ENCODE measurements at regions of chr1 and their contacts with region 1.

Region 1: DNA sequence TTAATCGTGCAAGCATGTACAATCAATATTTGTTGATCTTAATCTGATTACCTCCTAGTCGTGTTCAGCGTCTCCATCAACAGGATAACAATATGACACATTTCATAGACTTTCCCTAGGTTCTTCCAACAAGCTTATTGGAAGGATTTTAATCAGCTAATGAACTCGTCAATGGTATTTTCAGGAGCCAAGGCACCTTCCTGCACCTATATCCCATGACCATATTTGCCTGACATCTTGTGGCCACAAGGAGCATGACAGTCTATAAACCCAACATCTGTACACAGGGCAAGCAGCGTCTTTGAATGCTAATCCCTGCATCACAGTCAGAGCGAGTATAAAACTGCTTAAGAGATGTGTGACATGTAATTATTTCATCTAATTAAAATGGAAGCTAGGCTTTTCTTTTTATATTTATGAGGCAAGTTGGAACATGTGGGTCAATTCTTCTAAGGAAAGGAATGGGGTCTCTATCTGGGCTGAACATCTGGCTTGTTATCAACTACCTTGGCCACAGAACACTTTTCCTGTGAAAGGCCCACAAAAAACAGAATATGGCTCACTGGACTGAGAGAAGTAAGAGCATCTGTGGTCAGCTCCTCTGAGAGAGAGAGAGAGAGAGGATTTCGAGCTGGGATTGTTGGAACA is 388.8 kb downstream of the NTNG1 start:
- DNase-seq: peak; percentile 19 to 35
- H3K4me3 ChIP-seq: no peak overlapping the region
- H3K4me3 Mint-ChIP-seq: no peak overlapping the region
- H3K27ac Mint-ChIP-seq: no peak overlapping the region
- H3K4me1 ChIP-seq: no peaks in the 10 kb centered on the region
- H3K4me1 Mint-ChIP-seq: no peaks in the 10 kb centered on the region
- H3K27me3 ChIP-seq: no peaks in the 10 kb centered on the region
- H3K27me3 Mint-ChIP-seq: no peaks in the 10 kb centered on the region
- CTCF ChIP-seq: peak; percentile 55

Region 2: DNA sequence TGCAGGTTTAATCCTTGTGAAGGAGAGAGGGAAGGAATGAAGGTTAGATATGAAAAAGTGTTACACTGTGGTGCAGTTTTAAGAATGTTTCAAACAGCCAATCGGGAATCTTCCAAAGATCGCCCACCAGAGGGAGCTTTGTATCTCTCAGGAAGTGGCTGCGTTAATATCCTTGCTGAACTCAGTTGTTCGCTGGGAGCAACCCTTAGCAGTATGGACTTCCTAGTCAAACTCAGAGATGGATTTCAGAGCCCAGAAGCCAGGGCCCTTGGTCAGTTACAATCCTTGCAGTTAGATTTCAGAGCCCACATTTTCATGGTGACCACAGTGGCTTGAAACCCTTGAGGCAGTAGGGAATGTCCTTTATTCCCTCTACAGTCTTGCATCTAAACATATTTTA is 252.6 kb before region 1 on chr1:
- CTCF ChIA-PET with region 1: no interaction called
- POLR2A ChIA-PET with region 1: no interaction called
- intact Hi-C with region 1: loop called (anchors 1 kb)
- DNase-seq: peak; percentile 22 to 40
- H3K4me3 ChIP-seq: no peak overlapping the region
- H3K4me3 Mint-ChIP-seq: no peak overlapping the region
- H3K27ac Mint-ChIP-seq: no peak overlapping the region
- H3K4me1 ChIP-seq: no peaks in the 10 kb centered on the region
- H3K4me1 Mint-ChIP-seq: no peaks in the 10 kb centered on the region
- H3K27me3 ChIP-seq: no peaks in the 10 kb centered on the region
- H3K27me3 Mint-ChIP-seq: no peaks in the 10 kb centered on the region
- CTCF ChIP-seq: peak in 1 of 2 experiments; percentile 52

Region 3: GRCh38 chr1:107430540-107431228 is 98.9 kb before region 1 on chr1:
- CTCF ChIA-PET with region 1: interaction called, 3 read pairs
- POLR2A ChIA-PET with region 1: no interaction called
- intact Hi-C with region 1: loop called (anchors 1 kb)
- DNase-seq: peak; percentile 33 to 44
- H3K4me3 ChIP-seq: no peak overlapping the region
- H3K4me3 Mint-ChIP-seq: no peak overlapping the region
- H3K27ac Mint-ChIP-seq: no peak overlapping the region
- H3K4me1 ChIP-seq: no peaks in the 10 kb centered on the region
- H3K4me1 Mint-ChIP-seq: peaks cover 6% of the 10 kb centered on the region
- H3K27me3 ChIP-seq: no peaks in the 10 kb centered on the region
- H3K27me3 Mint-ChIP-seq: peaks cover 2% of the 10 kb centered on the region
- CTCF ChIP-seq: peak; percentile 63 to 72

Region 4: DNA sequence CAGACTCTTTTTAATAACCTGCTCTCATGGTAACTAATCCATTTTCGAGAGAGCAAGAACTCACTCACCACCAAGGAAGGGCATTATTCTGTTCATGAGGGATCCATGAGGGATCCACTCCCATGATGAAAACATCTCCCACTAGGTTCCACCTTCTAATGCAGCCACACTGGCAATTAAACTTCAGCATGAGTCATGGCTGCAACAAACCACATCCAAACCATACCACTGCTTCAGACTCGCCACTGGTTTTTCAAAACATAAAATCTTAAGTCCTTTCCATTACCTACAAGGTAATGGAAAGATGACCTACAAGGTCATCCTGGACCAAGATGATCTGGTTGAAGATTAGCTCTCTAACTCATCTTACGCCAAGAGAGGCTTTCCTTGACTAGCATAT is 30.3 kb after region 1 on chr1:
- CTCF ChIA-PET with region 1: no interaction called
- POLR2A ChIA-PET with region 1: no interaction called
- intact Hi-C with region 1: no loop called
- DNase-seq: no peak
- H3K4me3 ChIP-seq: no peak overlapping the region
- H3K4me3 Mint-ChIP-seq: no peak overlapping the region
- H3K27ac Mint-ChIP-seq: no peak overlapping the region
- H3K4me1 ChIP-seq: no peaks in the 10 kb centered on the region
- H3K4me1 Mint-ChIP-seq: no peaks in the 10 kb centered on the region
- H3K27me3 ChIP-seq: no peaks in the 10 kb centered on the region
- H3K27me3 Mint-ChIP-seq: no peaks in the 10 kb centered on the region
- CTCF ChIP-seq: no peak

Region 5: DNA sequence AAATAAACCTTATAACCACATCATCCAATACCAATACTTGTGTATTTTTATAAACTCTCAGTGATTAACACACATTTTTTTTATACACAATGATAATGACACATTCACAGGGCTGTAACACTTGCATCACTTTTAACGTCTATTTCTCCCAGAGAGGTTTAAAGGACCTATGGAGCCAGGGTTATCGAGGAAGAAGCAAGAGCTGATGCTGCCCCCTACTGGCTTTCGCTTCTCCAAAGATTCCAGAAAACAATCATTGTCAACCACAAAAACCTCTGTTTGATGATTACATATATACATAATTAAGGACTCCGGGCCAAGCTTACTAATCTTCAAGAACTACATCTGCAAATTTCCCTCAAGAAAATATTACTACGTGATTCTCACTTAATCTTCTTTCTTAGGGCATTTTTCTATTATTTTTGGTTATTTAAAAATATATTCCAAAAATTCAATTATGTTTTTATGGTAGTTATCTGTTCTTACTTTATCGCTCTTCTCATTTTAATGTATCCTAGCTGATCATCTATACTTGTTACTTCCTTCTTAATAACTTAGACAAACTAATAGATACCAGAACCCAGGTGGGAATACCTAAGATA is 220.8 kb after region 1 on chr1:
- CTCF ChIA-PET with region 1: interaction called, 3 read pairs
- POLR2A ChIA-PET with region 1: no interaction called
- intact Hi-C with region 1: loop called (anchors 10 kb)
- DNase-seq: peak; percentile 42 to 52
- H3K4me3 ChIP-seq: no peak overlapping the region
- H3K4me3 Mint-ChIP-seq: no peak overlapping the region
- H3K27ac Mint-ChIP-seq: no peak overlapping the region
- H3K4me1 ChIP-seq: no peaks in the 10 kb centered on the region
- H3K4me1 Mint-ChIP-seq: no peaks in the 10 kb centered on the region
- H3K27me3 ChIP-seq: no peaks in the 10 kb centered on the region
- H3K27me3 Mint-ChIP-seq: peaks cover 1% of the 10 kb centered on the region
- CTCF ChIP-seq: peak; percentile 44 to 54